PC-9 (cell line): ENCODE measurements at regions of chr1 and their contacts with region 1.

Region 1: GRCh38 chr1:51558360-51558924 is 39.4 kb upstream of the EPS15 start:
- DNase-seq: peak; percentile 93 to 99
- H3K4me3 ChIP-seq: peak overlapping the region; percentile 45; the same call in 1 of the 2 replicates
- H3K27ac ChIP-seq: peak overlapping the region; percentile 99
- H3K4me1 ChIP-seq: peaks cover 70% of the 10 kb centered on the region
- H3K27me3 ChIP-seq: no peaks in the 10 kb centered on the region
- CTCF ChIP-seq: no peak

Region 2: DNA sequence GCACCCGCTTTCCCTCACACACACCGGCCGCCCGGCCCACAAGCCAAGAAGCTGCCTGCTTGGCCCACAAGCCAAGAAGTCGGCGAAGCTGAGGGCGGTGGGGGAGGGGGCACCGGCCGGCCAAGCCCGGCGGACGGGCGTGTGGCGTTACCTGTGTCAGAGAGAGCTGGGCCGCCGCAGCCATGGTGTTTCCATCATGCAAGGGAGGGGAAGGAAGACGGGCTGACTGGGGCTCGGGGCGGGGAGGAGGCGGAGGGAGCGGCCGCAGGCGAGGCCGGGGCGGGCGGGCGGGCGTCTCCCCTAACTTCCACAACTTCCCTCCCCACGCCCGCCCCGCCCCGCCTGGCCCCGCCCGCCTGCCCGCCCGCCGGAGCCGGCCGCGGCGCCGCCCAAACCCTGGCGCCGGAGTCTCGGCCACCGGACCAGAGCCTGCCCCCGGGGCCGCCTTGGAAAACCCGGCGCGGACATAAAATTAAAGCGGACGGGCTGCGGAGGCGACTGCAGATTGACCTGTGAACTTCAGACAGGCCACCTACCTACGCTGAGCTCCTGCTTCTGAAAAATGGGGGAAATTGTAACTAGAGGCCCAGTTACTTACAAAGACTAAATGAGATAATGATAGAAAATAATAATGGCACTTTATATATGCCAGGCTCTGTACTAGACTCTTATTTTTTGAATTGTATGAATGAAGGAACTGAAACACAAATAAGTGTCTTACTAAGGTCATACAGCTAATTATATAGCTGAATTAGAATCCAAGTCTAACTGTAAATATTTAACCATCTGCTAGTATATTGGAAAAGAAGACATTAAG is 39.2 kb before region 1 on chr1 and contains the start of gene EPS15:
- CTCF ChIA-PET with region 1: interaction called, 4 read pairs
- POLR2A ChIA-PET with region 1: interaction called, 7 read pairs
- intact Hi-C with region 1: loop called (anchors 2 kb)
- DNase-seq: peak; percentile 65 to 89
- H3K4me3 ChIP-seq: peak within 1 kb of the TSS; percentile 100
- H3K27ac ChIP-seq: peak within 1 kb of the TSS; percentile 72
- H3K4me1 ChIP-seq: peaks cover 36% of the 10 kb centered on the region
- H3K27me3 ChIP-seq: no peaks in the 10 kb centered on the region
- CTCF ChIP-seq: no peak
- total RNA-seq, gene EPS15: 60.1 and 61.0 TPM in 2 replicates

Region 3: DNA sequence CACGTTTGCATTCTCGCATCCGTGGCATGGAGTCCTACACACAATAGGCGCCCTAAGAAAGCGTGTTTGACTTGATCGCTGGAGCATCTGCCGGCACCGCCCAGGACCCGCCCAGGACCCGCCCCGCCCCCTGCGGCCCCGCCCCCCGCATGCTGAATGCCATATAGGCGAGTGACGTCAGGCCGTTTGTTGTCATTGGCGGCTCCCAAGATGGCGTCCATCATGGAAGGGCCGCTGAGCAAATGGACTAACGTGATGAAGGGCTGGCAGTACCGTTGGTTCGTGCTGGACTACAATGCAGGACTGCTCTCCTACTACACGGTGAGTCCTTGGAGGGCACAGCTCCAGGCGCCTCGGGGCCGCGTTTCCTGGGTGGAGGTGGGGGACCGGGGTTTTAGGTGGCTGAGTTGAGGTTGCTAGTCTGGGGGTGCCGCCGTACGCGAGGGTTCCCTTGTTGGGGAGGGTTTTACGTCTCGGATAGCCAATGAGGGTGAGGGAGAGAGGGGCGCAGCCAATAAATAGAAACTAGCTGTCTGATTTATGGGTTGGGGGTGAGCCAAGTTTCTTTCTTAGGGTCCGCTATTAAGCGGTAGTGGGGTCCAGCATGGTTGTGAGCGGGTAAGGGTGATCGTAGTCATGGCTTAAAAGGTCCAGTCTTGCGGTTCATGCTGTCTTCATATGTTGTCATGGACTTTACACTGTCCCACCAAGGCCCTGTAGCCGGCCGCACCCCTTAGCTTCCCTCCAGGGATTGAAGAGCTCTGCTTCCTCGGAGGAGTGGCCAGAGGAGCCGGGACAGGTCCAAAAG is 58.7 kb after region 1 on chr1 and contains the start of gene OSBPL9:
- CTCF ChIA-PET with region 1: no interaction called
- POLR2A ChIA-PET with region 1: interaction called, 3 read pairs
- intact Hi-C with region 1: loop called (anchors 1 kb)
- DNase-seq: peak; percentile 76 to 83
- H3K4me3 ChIP-seq: peak within 1 kb of the TSS; percentile 80
- H3K27ac ChIP-seq: peak within 1 kb of the TSS; percentile 53
- H3K4me1 ChIP-seq: peaks cover 58% of the 10 kb centered on the region
- H3K27me3 ChIP-seq: no peaks in the 10 kb centered on the region
- CTCF ChIP-seq: no peak
- total RNA-seq, gene OSBPL9: 149 and 188 TPM in 2 replicates

Region 4: GRCh38 chr1:51622455-51622913 is 64.0 kb after region 1 on chr1:
- CTCF ChIA-PET with region 1: no interaction called
- POLR2A ChIA-PET with region 1: interaction called, 4 read pairs
- intact Hi-C with region 1: loop called (anchors 1 kb)
- DNase-seq: peak; percentile 87 to 98
- H3K4me3 ChIP-seq: peak overlapping the region; percentile 33; the same call in 1 of the 2 replicates
- H3K27ac ChIP-seq: peak overlapping the region; percentile 96
- H3K4me1 ChIP-seq: peaks cover 63% of the 10 kb centered on the region
- H3K27me3 ChIP-seq: no peaks in the 10 kb centered on the region
- CTCF ChIP-seq: no peak

Region 5: GRCh38 chr1:51648180-51649109 is 90.0 kb after region 1 on chr1:
- CTCF ChIA-PET with region 1: no interaction called
- POLR2A ChIA-PET with region 1: no interaction called
- intact Hi-C with region 1: loop called (anchors 2 kb)
- DNase-seq: peak; percentile 75 to 90
- H3K4me3 ChIP-seq: peak overlapping the region; percentile 35
- H3K27ac ChIP-seq: peak overlapping the region; percentile 78
- H3K4me1 ChIP-seq: peaks cover 54% of the 10 kb centered on the region
- H3K27me3 ChIP-seq: no peaks in the 10 kb centered on the region
- CTCF ChIP-seq: no peak

Region 6: GRCh38 chr1:51729156-51729823 is 170.8 kb after region 1 on chr1:
- CTCF ChIA-PET with region 1: no interaction called
- POLR2A ChIA-PET with region 1: no interaction called
- intact Hi-C with region 1: loop called (anchors 1 kb)
- DNase-seq: peak; percentile 91 to 99
- H3K4me3 ChIP-seq: peak overlapping the region; percentile 60
- H3K27ac ChIP-seq: peak overlapping the region; percentile 66
- H3K4me1 ChIP-seq: peaks cover 48% of the 10 kb centered on the region
- H3K27me3 ChIP-seq: no peaks in the 10 kb centered on the region
- CTCF ChIP-seq: no peak

Region 7: GRCh38 chr1:51760872-51761271 is 202.4 kb after region 1 on chr1:
- CTCF ChIA-PET with region 1: no interaction called
- POLR2A ChIA-PET with region 1: no interaction called
- intact Hi-C with region 1: loop called (anchors 2 kb)
- DNase-seq: peak in 1 of 2 experiments; percentile 76
- H3K4me3 ChIP-seq: no peak overlapping the region
- H3K27ac ChIP-seq: peak overlapping the region; percentile 60
- H3K4me1 ChIP-seq: peaks cover 30% of the 10 kb centered on the region
- H3K27me3 ChIP-seq: no peaks in the 10 kb centered on the region
- CTCF ChIP-seq: no peak